ENCODE measurements at regions of chr15 and their contacts with region 1.

Region 1: DNA sequence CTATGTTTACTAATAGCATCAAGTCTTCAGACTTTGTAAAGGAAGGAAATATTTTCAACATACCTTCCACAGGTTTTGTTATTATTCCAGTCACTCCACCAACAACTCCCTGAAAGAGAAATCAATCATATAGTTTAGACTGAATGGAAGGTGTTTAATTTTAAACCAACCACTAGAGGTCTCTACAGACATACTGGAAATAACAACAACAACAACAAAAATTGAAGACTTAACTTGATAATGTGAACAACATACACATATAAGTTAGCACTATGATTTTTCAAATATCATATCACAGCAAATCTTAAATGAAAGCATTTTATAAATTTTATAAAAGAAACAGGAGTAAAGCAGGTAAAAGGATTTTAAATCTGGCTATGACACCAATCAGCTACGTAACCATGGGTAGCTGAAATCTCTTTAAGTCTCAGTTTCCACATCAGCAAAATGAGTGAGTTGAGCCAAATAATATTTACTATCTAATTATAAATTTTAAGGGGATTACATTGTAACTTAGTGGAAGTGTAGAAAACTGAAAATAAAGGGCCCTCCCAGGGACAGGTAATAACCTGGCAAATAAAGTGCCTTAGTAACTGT is 188.2 kb downstream of the VPS13C start:
- DNase-seq: no peak
- H3K4me3 ChIP-seq: no peak overlapping the region
- H3K4me3 Mint-ChIP-seq: no peak overlapping the region
- H3K27ac Mint-ChIP-seq: no peak overlapping the region
- H3K4me1 ChIP-seq: no peaks in the 10 kb centered on the region
- H3K4me1 Mint-ChIP-seq: no peaks in the 10 kb centered on the region
- H3K27me3 ChIP-seq: no peaks in the 10 kb centered on the region
- H3K27me3 Mint-ChIP-seq: no peaks in the 10 kb centered on the region
- CTCF ChIP-seq: peak; percentile 30 to 43

Region 2: DNA sequence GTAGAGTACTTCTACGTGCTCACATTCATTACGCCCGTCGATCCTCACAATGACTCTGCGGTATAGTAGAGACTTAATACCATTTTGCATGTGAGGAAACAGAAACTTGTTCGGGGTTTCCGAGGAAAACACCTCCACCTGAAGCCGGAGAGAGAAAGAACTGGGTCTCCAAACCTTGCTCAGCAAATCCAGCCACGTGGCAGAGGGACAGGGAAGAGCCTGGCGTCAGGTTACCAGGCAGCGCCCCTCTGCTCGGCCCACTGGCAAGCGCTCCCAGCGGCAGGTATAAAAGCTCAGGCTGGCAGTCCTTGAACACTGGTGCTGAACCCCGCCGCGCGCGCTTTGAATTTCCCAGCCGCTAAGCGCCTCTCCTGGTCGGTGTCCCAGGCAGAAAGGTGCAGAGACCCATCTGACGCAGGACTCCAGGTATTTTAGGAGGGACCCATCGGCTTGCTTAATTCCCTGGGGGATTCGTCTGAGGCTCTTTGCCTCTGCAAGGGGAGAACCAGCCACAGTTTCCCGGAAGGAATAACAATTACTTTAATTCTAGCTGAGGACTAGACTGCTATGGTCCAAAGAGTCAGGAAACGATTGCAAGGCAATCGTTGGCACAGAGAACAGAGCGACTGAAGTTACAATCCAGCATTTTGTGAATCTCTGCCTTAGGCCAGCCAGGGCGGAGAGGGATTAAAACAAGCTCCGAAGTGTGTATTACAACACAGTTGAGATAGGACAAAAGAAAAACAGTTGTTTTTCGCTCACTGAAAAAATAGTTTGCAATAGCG is 194.8 kb after region 1 on chr15 and contains the start of gene C2CD4A:
- CTCF ChIA-PET with region 1: no interaction called
- POLR2A ChIA-PET with region 1: no interaction called
- intact Hi-C with region 1: loop called (anchors 1 kb)
- DNase-seq: peak; percentile 87 to 90
- H3K4me3 ChIP-seq: peak within 1 kb of the TSS; percentile 38
- H3K4me3 Mint-ChIP-seq: peak within 1 kb of the TSS; percentile 73
- H3K27ac Mint-ChIP-seq: no peak within 1 kb of the TSS
- H3K4me1 ChIP-seq: peaks cover 10% of the 10 kb centered on the region
- H3K4me1 Mint-ChIP-seq: peaks cover 3% of the 10 kb centered on the region
- H3K27me3 ChIP-seq: no peaks in the 10 kb centered on the region
- H3K27me3 Mint-ChIP-seq: peaks cover 3% of the 10 kb centered on the region
- CTCF ChIP-seq: peak in 1 of 2 experiments; percentile 37
- total RNA-seq, gene C2CD4A: 0.11 and 0.19 TPM in 2 replicates

Region 3: DNA sequence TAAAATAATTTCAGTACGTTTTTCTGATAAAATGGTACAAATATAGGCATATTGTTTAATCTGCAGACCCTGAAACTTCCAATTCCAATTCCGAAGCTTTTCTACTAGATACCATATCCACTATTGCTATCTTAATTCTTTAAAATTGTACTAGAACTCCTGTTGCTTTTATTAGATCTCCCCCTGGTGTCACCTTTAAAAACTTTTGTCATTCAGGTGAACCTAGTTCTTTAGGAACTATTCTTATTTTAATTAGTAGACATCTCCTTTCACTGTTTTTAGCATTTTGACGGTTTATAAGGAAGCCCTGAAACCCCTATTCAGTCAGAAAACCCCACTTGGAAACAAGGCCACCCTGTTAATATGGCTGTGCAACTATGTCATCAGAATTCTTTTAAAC is 270.7 kb after region 1 on chr15:
- CTCF ChIA-PET with region 1: no interaction called
- POLR2A ChIA-PET with region 1: no interaction called
- intact Hi-C with region 1: loop called (anchors 10 kb)
- DNase-seq: no peak
- H3K4me3 ChIP-seq: no peak overlapping the region
- H3K4me3 Mint-ChIP-seq: no peak overlapping the region
- H3K27ac Mint-ChIP-seq: no peak overlapping the region
- H3K4me1 ChIP-seq: peaks cover 19% of the 10 kb centered on the region; the same call in 1 of the 2 replicates
- H3K4me1 Mint-ChIP-seq: peaks cover 13% of the 10 kb centered on the region
- H3K27me3 ChIP-seq: no peaks in the 10 kb centered on the region
- H3K27me3 Mint-ChIP-seq: no peaks in the 10 kb centered on the region
- CTCF ChIP-seq: peak in 1 of 2 experiments; percentile 2

Measured in Caco-2 (cell line).